Panc1 (cell line): ENCODE measurements at regions of chr3 and their contacts with region 1.

Region 1: GRCh38 chr3:141223673-141224166 is 7.9 kb upstream of the PXYLP1 start:
- DNase-seq: no peak
- ATAC-seq: no peak
- H3K4me3 ChIP-seq: no peak overlapping the region
- H3K27ac ChIP-seq: no peak overlapping the region
- H3K4me1 ChIP-seq: no peaks in the 10 kb centered on the region
- H3K27me3 ChIP-seq: no peaks in the 10 kb centered on the region
- CTCF ChIP-seq: no peak

Region 2: DNA sequence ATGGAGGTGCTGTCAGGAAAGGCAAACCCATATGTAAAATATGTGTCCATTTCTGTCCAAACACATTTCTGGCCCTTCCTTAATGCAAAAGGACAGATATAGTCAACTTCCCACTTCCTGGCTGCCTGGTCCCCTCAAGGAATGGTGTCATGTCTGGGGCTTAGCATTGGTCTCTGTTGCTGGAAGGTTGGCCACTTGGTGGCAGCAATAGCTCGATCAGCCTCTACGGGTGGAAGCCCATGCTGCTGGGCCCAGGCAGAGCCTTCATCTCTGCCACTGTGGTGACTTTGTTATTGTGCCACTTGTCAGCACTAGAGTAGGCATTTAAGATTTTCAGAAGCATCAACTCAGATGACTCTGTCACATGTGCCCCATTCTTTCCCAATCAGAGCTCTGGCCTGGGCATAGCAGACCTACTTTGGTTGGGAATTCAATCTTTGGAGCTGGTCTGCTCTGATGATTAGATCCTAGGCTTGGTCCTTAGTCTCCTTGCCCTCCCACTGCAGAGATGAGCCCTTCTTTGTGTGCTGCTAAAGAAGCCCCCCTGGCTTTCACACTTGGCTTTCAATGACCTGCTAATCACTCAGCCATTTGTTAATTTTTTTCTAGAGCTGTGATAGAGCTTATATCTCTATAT is 223.6 kb before region 1 on chr3:
- CTCF ChIA-PET with region 1: interaction called, 18 read pairs
- POLR2A ChIA-PET with region 1: no interaction called
- in situ Hi-C with region 1: no loop called
- intact Hi-C with region 1: no loop called
- DNase-seq: peak; percentile 41
- ATAC-seq: peak; percentile 99
- H3K4me3 ChIP-seq: no peak overlapping the region
- H3K27ac ChIP-seq: no peak overlapping the region
- H3K4me1 ChIP-seq: no peaks in the 10 kb centered on the region
- H3K27me3 ChIP-seq: no peaks in the 10 kb centered on the region; the same call in 1 of the 2 replicates
- CTCF ChIP-seq: peak; percentile 88